Endothelial cell of umbilical vein (primary cell): ENCODE measurements at regions of chr6 and their contacts with region 1.

Region 1: GRCh38 chr6:113122060-113122459 is 735.1 kb upstream of the MARCKS start:
- DNase-seq: peak; percentile 97
- H3K4me3 ChIP-seq: no peak overlapping the region
- H3K27ac ChIP-seq: peak overlapping the region; percentile 89
- H3K4me1 ChIP-seq: peaks cover 40% of the 10 kb centered on the region
- H3K27me3 ChIP-seq: no peaks in the 10 kb centered on the region
- CTCF ChIP-seq: peak; percentile 44
- POLR2A ChIP-seq: peak; percentile 17

Region 2: GRCh38 chr6:112780498-112781096 is 341.5 kb before region 1 on chr6:
- CTCF ChIA-PET with region 1: interaction called, 3 read pairs
- POLR2A ChIA-PET with region 1: no interaction called
- dilution Hi-C with region 1: no loop called
- intact Hi-C with region 1: loop called (anchors 1 kb)
- DNase-seq: peak; percentile 87
- H3K4me3 ChIP-seq: no peak overlapping the region
- H3K27ac ChIP-seq: peak overlapping the region; percentile 19
- H3K4me1 ChIP-seq: peaks cover 6% of the 10 kb centered on the region
- H3K27me3 ChIP-seq: no peaks in the 10 kb centered on the region
- CTCF ChIP-seq: peak; percentile 53 to 67
- POLR2A ChIP-seq: no peak

Region 3: DNA sequence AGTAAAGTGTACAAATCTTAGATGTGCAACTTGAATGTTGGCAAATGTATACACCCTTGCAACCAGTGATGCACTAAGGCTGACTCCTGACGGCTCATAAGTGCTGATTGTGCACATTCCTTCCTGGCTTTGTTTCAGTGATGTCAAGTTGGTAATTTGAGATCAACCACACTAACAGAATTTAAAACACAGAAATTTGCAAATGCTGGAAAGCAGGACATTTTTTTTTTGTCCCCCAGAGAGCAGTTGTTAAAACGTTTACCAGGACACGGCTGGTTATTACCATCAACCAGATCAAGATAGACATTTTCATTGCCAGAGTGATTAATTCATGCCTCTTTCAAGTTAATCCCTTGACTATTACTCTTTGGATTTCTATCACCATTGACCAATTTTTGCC is 39.3 kb before region 1 on chr6:
- CTCF ChIA-PET with region 1: no interaction called
- POLR2A ChIA-PET with region 1: no interaction called
- dilution Hi-C with region 1: no loop called
- intact Hi-C with region 1: no loop called
- DNase-seq: peak; percentile 9
- H3K4me3 ChIP-seq: no peak overlapping the region
- H3K27ac ChIP-seq: no peak overlapping the region
- H3K4me1 ChIP-seq: no peaks in the 10 kb centered on the region
- H3K27me3 ChIP-seq: no peaks in the 10 kb centered on the region
- CTCF ChIP-seq: no peak
- POLR2A ChIP-seq: no peak

Region 4: DNA sequence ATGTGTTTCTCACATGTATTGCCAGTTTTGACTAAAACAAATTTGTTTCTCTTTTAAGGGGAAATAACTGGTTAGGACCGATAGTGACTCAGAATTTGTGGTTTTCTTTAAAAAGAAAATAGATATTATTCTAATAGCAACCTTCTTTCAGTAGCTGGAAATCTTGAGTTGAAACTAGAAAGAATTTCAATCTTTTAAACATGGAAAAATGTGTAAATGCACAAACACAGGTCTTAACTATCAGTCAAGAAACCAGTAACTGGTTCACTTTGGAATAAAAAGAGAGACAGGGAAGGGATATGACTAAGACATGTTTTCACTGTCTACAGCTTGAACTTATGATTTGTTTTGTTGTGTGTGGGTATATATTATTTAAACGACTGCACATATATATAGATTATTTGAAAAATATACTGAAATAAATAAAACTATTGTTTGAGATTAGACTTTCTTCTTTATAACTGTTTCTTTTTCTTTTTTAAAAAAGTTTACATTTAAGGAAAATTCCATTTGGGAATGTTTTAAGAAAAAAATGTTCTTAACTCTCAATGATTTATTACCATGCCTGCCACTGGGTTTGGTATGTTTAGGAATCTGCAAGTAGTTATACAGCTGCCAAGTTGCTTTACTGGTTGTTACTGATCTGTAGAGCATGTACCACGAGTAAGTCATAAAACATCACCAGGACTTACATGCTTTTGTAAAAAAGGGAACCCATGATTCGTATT is 18.3 kb before region 1 on chr6:
- CTCF ChIA-PET with region 1: interaction called, 4 read pairs
- POLR2A ChIA-PET with region 1: no interaction called
- dilution Hi-C with region 1: no loop called
- intact Hi-C with region 1: loop called (anchors 1 kb)
- DNase-seq: peak; percentile 88
- H3K4me3 ChIP-seq: peak overlapping the region in 1 of 3 experiments; percentile 12
- H3K27ac ChIP-seq: peak overlapping the region; percentile 98
- H3K4me1 ChIP-seq: peaks cover 27% of the 10 kb centered on the region
- H3K27me3 ChIP-seq: no peaks in the 10 kb centered on the region
- CTCF ChIP-seq: no peak
- POLR2A ChIP-seq: no peak

Region 5: DNA sequence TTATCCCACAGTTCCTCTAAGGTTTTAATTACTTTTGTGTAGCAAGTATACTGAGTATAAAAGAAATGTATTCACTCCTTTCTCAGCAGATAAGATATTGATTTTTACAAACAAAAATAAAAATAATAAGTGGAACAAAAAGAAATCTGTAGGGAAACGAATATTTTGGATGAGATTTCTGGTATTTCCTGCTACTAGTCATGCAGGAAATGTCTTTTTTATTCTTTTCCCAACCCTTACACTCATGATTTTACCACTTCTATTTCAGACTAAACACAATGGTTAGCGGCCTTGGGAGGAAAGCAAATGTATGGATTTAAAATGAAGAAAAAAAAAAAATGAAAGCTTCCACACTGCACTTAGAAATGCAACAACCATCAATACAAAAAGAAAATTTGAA is 154.5 kb after region 1 on chr6:
- CTCF ChIA-PET with region 1: no interaction called
- POLR2A ChIA-PET with region 1: no interaction called
- dilution Hi-C with region 1: no loop called
- intact Hi-C with region 1: loop called (anchors 1 kb)
- DNase-seq: peak; percentile 62
- H3K4me3 ChIP-seq: peak overlapping the region in 1 of 3 experiments; percentile 34
- H3K27ac ChIP-seq: peak overlapping the region; percentile 30
- H3K4me1 ChIP-seq: peaks cover 23% of the 10 kb centered on the region
- H3K27me3 ChIP-seq: no peaks in the 10 kb centered on the region
- CTCF ChIP-seq: no peak
- POLR2A ChIP-seq: no peak

Region 6: GRCh38 chr6:113414511-113414910 is 292.5 kb after region 1 on chr6:
- CTCF ChIA-PET with region 1: interaction called, 3 read pairs
- POLR2A ChIA-PET with region 1: no interaction called
- dilution Hi-C with region 1: no loop called
- intact Hi-C with region 1: loop called (anchors 2 kb)
- DNase-seq: peak; percentile 79
- H3K4me3 ChIP-seq: no peak overlapping the region
- H3K27ac ChIP-seq: no peak overlapping the region
- H3K4me1 ChIP-seq: peaks cover 9% of the 10 kb centered on the region
- H3K27me3 ChIP-seq: no peaks in the 10 kb centered on the region
- CTCF ChIP-seq: peak; percentile 55 to 57
- POLR2A ChIP-seq: no peak

Region 7: DNA sequence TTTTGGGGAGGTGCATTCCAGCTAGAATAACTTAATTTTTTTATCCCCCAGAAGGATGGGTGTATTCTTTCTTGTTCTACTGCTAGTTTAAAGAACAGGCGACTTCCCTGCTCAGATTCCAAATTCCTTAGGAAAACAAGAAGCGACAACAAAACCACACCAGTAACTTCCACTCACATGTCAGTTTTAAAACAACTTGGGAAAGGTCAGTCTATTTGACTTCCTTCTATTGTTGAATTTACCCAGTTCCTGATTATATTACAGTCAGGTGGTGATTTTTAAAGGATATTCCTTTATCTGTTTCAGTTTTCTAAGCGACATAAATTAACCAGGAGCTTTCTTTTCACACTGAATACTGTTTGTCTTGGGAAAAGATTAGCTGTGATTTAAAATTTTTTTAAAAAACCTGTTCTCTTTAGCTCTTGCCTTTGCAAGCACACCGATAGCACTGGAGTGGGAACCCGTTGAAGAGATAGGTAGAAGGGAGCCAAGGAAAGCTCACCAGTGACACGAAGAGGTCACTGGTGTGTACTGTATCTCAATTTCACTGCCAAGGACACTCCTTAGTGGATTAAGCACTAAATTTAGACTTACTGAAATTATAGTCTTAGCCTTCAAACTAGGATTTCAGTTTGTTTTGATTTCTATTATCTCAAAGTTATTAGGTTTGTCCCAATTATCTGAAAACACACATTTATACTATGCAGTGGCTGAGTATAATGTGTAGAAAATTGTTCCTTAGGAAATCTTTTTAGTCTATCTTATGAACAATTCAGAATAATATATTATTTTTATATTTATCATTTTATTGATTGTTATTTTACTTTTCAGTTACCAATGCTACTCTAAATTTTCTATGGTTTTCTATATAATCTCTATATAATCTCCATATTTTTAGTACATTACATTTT is 757.4 kb after region 1 on chr6:
- CTCF ChIA-PET with region 1: interaction called, 14 read pairs
- POLR2A ChIA-PET with region 1: no interaction called
- dilution Hi-C with region 1: no loop called
- intact Hi-C with region 1: loop called (anchors 1 kb)
- DNase-seq: peak; percentile 91
- H3K4me3 ChIP-seq: peak overlapping the region in 1 of 3 experiments; percentile 69
- H3K27ac ChIP-seq: peak overlapping the region; percentile 63
- H3K4me1 ChIP-seq: peaks cover 9% of the 10 kb centered on the region
- H3K27me3 ChIP-seq: no peaks in the 10 kb centered on the region
- CTCF ChIP-seq: peak; percentile 68
- POLR2A ChIP-seq: no peak